Right ventricle myocardium inferior (tissue), 1 donor: ENCODE measurements at regions of chr2 and their contacts with region 1.

Region 1: GRCh38 chr2:16773080-16773713 is 107.6 kb upstream of the CYRIA start:
- DNase-seq: no peak
- ATAC-seq: peak; percentile 60

Region 2: GRCh38 chr2:16791496-16791895 is 18.3 kb after region 1 on chr2:
- intact Hi-C with region 1: no loop called
- DNase-seq: no peak
- ATAC-seq: no peak

Region 3: GRCh38 chr2:16925145-16925544 is 151.9 kb after region 1 on chr2:
- intact Hi-C with region 1: no loop called
- DNase-seq: no peak
- ATAC-seq: no peak

Region 4: GRCh38 chr2:17299891-17300540 is 526.8 kb after region 1 on chr2:
- intact Hi-C with region 1: loop called (anchors 5 kb)
- DNase-seq: no peak
- ATAC-seq: no peak

Region 5: DNA sequence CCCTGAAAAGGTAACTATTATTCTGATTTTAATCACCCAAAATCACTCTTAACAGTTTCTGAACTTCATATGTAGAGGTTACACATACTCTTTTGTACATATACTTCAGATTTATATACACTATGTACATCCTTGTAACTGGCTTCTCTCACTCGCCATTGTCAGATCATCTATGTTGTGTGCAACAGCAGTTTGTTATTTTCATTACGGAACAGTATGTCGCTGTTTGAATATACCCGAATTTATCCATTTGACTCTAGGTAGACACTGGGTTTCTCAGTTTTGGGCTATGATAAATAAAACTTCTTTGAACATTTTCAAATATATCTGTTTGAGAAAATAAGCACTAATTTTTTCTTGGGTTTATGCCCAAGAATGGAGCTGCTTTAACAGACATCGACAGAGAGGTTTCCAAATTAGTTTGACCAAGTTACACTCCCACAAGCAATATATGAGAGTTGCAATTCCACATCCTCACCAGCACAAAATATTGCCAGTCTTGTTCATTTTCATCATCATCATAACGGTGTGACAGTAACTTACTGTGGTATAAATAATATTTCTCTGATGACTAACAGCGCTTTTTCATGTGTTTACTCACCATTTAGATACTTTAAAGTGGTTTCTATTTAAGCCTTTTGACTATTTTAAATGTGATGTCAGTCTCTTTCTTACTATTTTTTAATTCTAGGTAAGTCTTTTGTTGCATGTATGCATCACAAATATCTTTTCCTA is 899.6 kb after region 1 on chr2:
- intact Hi-C with region 1: loop called (anchors 5 kb)
- DNase-seq: no peak
- ATAC-seq: no peak